PC-3 (cell line): ENCODE measurements at regions of chr12 and their contacts with region 1.

Region 1: DNA sequence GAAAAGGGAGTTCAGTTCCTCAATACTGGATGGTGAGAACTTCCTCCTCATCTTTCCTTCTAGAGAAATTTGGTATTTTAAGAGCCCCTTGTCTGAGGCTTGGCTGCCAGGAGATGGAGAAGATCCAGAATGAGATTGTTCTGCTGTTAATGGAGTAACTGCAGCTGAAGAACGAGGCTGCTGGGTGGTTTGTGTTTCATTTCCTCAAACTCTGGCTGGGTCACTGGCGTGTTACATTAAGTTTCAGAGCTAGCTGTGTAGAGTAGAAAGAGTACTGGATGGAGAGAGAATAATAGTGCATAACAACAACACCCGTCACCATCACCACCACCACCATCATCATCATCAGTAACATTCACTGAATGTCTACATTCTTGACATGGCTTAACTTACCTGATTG is 325.0 kb upstream of the TBX3 start:
- DNase-seq: no peak
- ATAC-seq: no peak
- H3K4me3 ChIP-seq: no peak overlapping the region
- H3K27ac ChIP-seq: no peak overlapping the region
- H3K4me1 ChIP-seq: peaks cover 51% of the 10 kb centered on the region
- H3K27me3 ChIP-seq: no peaks in the 10 kb centered on the region
- CTCF ChIP-seq: no peak

Region 2: GRCh38 chr12:114760151-114760877 is 248.6 kb before region 1 on chr12:
- CTCF ChIA-PET with region 1: interaction called, 11 read pairs
- POLR2A ChIA-PET with region 1: no interaction called
- intact Hi-C with region 1: loop called (anchors 5 kb)
- DNase-seq: peak; percentile 95
- ATAC-seq: peak; percentile 89
- H3K4me3 ChIP-seq: no peak overlapping the region
- H3K27ac ChIP-seq: peak overlapping the region; percentile 89
- H3K4me1 ChIP-seq: peaks cover 25% of the 10 kb centered on the region
- H3K27me3 ChIP-seq: no peaks in the 10 kb centered on the region
- CTCF ChIP-seq: no peak

Region 3: DNA sequence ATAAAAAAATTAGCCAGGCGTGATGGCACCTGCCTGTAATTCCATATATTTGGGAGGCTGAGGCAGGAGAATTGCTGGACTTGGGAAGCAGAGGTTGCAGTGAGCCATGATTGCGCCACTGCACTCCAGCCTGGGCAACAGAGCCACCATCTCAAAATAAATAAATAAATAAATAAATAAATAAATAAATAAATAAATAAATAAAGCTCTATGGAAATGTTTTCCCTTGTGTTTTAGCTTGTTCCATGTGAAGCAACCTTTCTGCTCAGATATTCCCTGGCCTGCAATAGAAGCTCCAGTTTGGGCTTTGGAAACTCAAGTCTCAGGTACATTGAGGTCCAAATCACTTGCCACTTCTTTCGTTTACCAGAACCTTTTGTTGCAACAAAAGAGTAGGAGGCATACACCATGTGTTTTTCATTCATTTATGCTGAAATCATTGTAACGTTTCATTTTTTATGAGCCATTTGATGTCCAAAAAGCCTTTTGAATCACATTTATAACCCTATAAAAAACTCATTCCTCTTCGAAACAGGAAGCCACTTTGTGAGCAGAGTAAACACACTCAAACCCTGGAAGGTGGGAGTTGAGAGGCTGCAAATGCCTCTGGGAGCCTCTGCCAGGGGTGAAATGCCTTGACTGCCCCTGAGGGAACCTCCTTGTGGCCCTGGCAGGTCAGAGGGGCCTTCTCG is 51.7 kb after region 1 on chr12:
- CTCF ChIA-PET with region 1: no interaction called
- POLR2A ChIA-PET with region 1: no interaction called
- intact Hi-C with region 1: loop called (anchors 1 kb)
- DNase-seq: peak; percentile 89
- ATAC-seq: peak; percentile 94
- H3K4me3 ChIP-seq: no peak overlapping the region
- H3K27ac ChIP-seq: peak overlapping the region; percentile 67
- H3K4me1 ChIP-seq: peaks cover 17% of the 10 kb centered on the region
- H3K27me3 ChIP-seq: no peaks in the 10 kb centered on the region
- CTCF ChIP-seq: no peak

Region 4: GRCh38 chr12:116416166-116416565 is 1407.2 kb after region 1 on chr12:
- CTCF ChIA-PET with region 1: no interaction called
- POLR2A ChIA-PET with region 1: no interaction called
- intact Hi-C with region 1: no loop called
- DNase-seq: no peak
- ATAC-seq: no peak
- H3K4me3 ChIP-seq: no peak overlapping the region
- H3K27ac ChIP-seq: no peak overlapping the region
- H3K4me1 ChIP-seq: no peaks in the 10 kb centered on the region
- H3K27me3 ChIP-seq: no peaks in the 10 kb centered on the region
- CTCF ChIP-seq: no peak